GM12878 (cell line): ENCODE measurements at regions of chr7 and their contacts with region 1.

Region 1: DNA sequence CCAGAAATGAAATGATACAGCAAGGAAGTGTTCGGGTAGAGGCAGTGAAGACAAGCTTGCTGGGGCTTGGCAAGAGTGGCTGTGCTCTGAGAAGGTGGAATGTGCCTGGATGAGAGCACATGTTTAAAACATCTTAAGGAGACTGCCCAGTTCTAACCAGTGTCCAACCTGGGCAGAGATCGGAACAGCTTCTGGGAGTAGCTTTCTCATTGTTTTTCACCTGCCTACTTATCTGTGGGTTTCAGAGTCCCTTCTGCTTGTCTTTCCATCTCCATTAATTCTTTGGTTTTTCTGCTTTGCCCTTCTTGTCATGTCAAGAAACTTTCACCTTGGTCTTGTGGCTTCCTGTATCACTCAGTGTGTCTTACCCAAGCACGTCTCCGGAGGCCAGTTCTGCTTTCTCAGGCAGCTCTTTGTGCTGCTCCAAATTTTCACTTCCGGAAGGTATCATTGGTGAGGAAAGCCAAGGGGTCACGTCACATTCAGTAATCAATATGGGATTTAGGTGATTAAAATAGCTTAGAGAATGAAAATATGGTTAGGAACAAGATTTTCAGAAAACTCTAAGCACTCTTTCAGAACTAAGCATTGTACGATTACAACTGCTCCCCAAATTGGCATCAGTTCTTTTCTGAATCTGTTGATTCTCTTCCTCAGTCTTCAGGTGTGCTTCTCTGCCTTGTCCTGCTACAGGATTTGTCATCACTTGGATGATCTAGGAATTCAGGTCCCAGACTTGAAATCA is 5.5 kb upstream of the LAMB4 start:
- DNase-seq: peak; percentile 88
- ATAC-seq: peak; percentile 93
- H3K4me3 ChIP-seq: 0 out of 2 replicates have a peak overlapping the region, but pooled peaks have one; percentile 14
- H3K27ac ChIP-seq: peak overlapping the region; percentile 59
- H3K4me1 ChIP-seq: peaks cover 18% of the 10 kb centered on the region
- H3K27me3 ChIP-seq: no peaks in the 10 kb centered on the region
- CTCF ChIP-seq: no peak
- EP300 ChIP-seq: peak; percentile 79 to 93; a peak in 3 of 4 replicates
- POLR2A ChIP-seq: no peak
- RAD21 ChIP-seq: 0 out of 2 replicates have a peak, but pooled peaks have one; percentile 8

Region 2: DNA sequence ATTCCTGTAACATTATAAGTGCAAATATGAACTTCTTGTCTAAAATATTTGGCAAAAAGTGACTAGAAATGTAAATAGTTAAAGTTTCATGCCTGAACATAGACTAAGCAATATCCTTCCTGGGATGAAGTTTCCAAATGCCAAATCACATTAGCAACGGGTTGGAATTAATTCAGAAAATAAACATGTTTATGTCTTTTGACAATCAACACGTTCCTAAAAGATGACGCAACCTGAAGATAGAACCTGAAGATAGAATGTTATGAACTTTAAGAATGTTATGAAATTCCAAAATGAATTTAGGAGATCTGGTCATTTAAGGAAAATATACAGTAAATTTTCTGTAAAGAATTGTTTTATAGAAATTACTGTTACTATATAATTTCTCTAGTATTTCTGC is 14.7 kb before region 1 on chr7:
- CTCF ChIA-PET with region 1: interaction called, 34 read pairs
- POLR2A ChIA-PET with region 1: interaction called, 31 read pairs
- RAD21 ChIA-PET with region 1: interaction called, 14 read pairs
- SMC1A ChIA-PET with region 1: interaction called, 65 read pairs
- in situ Hi-C with region 1: no loop called
- intact Hi-C with region 1: no loop called
- DNase-seq: no peak
- ATAC-seq: no peak
- H3K4me3 ChIP-seq: no peak overlapping the region
- H3K27ac ChIP-seq: no peak overlapping the region
- H3K4me1 ChIP-seq: no peaks in the 10 kb centered on the region
- H3K27me3 ChIP-seq: 0 out of 4 replicates have a peak, but pooled peaks cover 0 to 3% of the 10 kb centered on the region in 2 experiments
- CTCF ChIP-seq: no peak
- EP300 ChIP-seq: no peak
- POLR2A ChIP-seq: no peak
- RAD21 ChIP-seq: no peak